ENCODE measurements at regions of chr16 and their contacts with region 1.

Region 1: DNA sequence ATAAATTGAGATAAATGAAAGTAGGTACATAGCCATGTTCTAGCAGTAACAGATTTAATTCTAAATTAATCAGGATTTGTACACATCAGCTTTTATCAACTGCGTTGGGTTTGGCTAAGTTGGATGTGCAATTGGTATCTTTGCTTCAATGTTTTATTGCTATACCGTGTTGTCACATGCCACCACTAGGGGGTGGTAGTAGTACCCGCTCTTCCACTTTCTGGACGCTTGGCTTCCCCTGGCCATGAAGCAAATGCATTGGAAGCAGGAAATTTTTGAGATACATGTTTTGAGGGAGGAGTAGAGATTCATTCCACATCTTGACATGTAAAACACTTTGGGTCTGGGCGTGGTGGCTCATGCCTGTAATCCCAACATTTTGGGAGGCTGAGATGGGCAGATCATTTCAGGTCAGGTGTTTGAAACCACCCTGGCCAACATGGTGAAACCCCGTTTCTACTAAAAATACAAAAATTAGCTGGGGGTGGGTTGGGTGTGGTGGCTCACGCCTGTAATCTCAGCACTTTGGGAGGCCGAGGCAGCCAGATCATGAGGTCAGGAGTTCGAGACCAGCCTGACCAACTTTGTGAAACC is 58.6 kb downstream of the EMP2 start:
- DNase-seq: peak; percentile 73
- H3K4me3 ChIP-seq: no peak overlapping the region
- H3K27ac ChIP-seq: no peak overlapping the region
- H3K4me1 ChIP-seq: no peaks in the 10 kb centered on the region
- H3K27me3 ChIP-seq: no peaks in the 10 kb centered on the region
- CTCF ChIP-seq: peak; percentile 79

Region 2: GRCh38 chr16:10579965-10580882 is 58.4 kb after region 1 on chr16 and contains the start of gene EMP2:
- CTCF ChIA-PET with region 1: no interaction called
- POLR2A ChIA-PET with region 1: no interaction called
- intact Hi-C with region 1: loop called (anchors 10 kb)
- DNase-seq: peak; percentile 81
- H3K4me3 ChIP-seq: peak within 1 kb of the TSS; percentile 84
- H3K27ac ChIP-seq: peak within 1 kb of the TSS; percentile 79
- H3K4me1 ChIP-seq: peaks cover 4% of the 10 kb centered on the region
- H3K27me3 ChIP-seq: no peaks in the 10 kb centered on the region
- CTCF ChIP-seq: peak; percentile 71
- total RNA-seq, gene EMP2: 12.9 and 15.9 TPM in 2 replicates